Naive thymus-derived CD4-positive, alpha-beta T cell (primary cell): ENCODE measurements at regions of chr19 and their contacts with region 1.

Region 1: GRCh38 chr19:1592755-1593500 is at the start of gene MBD3:
- DNase-seq: peak; percentile 81 to 92 (median 88)
- ATAC-seq: peak; percentile 92
- H3K4me3 ChIP-seq: peak within 1 kb of the TSS; percentile 86
- H3K4me3 Mint-ChIP-seq: peak within 1 kb of the TSS; percentile 84 to 92 (median 90)
- H3K27ac ChIP-seq: peak within 1 kb of the TSS; percentile 99
- H3K27ac Mint-ChIP-seq: peak within 1 kb of the TSS; percentile 79 to 95 (median 91)
- H3K4me1 ChIP-seq: peaks cover 10 to 16% of the 10 kb centered on the region in 2 donors
- H3K4me1 Mint-ChIP-seq: peaks cover 8 to 22% (median 15%) of the 10 kb centered on the region in 7 donors
- H3K27me3 ChIP-seq: no peaks in the 10 kb centered on the region
- H3K27me3 Mint-ChIP-seq: no peaks in the 10 kb centered on the region
- total RNA-seq, gene MBD3: 50.1 to 87.8 (median 64.6) TPM

Region 2: DNA sequence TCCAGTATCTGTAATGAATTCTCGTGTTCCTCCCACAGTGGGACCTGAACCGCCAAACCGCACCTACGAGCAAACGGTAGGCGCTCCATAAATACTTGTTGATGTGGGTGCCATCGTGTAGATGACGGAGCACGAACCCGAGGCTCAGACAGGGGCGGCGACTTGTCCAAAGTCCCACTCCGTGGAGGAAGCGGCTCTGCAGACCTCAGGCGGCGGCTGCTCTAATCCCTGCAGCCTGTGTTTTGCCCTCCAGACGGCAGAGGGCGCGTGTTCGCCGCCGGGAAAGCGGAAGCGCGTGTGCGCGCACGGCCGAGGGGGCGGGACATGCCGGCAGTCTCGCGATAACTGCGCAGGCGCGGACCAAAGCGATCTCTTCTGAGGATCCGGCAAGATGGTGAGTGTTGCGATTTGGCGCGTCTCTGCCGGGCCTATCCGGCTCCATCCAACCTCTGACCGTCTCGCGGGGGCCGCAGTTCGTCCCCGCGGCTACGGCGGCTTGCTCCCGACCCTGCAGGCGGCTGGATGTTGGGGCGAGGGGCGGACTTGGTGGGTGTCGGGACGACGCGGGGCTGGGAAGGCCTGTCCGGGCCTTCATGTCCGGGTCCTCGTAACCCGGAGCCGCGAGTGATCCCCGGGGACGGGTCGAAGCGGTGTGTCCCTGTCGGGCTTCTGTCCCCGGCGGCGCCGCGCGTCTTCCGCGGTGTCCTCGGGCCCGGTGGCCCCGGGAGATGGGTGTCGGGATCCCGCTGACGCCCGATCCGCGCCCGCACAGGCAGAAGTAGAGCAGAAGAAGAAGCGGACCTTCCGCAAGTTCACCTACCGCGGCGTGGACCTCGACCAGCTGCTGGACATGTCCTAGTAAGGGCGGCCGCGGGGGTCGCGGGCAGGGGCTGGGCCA is 154.6 kb before region 1 on chr19 and contains the start of gene RPS15:
- CTCF ChIA-PET with region 1: no interaction called
- POLR2A ChIA-PET with region 1: interaction called, 3 read pairs
- intact Hi-C with region 1: loop called in 1 of 2 experiments (anchors 1 kb)
- DNase-seq: peak; percentile 92 to 98 (median 96)
- ATAC-seq: peak; percentile 97
- H3K4me3 ChIP-seq: peak within 1 kb of the TSS; percentile 82
- H3K4me3 Mint-ChIP-seq: peak within 1 kb of the TSS; percentile 87 to 99 (median 98)
- H3K27ac ChIP-seq: peak within 1 kb of the TSS; percentile 92
- H3K27ac Mint-ChIP-seq: peak within 1 kb of the TSS; percentile 96 to 100 (median 99)
- H3K4me1 ChIP-seq: peaks cover 8 to 11% of the 10 kb centered on the region in 2 donors
- H3K4me1 Mint-ChIP-seq: peaks cover 9 to 34% (median 15%) of the 10 kb centered on the region in 7 donors
- H3K27me3 ChIP-seq: no peaks in the 10 kb centered on the region
- H3K27me3 Mint-ChIP-seq: no peaks in the 10 kb centered on the region
- total RNA-seq, gene RPS15: 1,300 to 2,097 (median 2,012) TPM

Region 3: GRCh38 chr19:1507763-1508509 is 85.0 kb before region 1 on chr19:
- CTCF ChIA-PET with region 1: no interaction called
- POLR2A ChIA-PET with region 1: no interaction called
- intact Hi-C with region 1: loop called in 1 of 2 experiments (anchors 1 kb)
- DNase-seq: peak; percentile 76 to 96 (median 94)
- ATAC-seq: peak; percentile 97
- H3K4me3 ChIP-seq: peak overlapping the region; percentile 48
- H3K4me3 Mint-ChIP-seq: peak overlapping the region; percentile 75 to 92 (median 86)
- H3K27ac ChIP-seq: peak overlapping the region; percentile 79
- H3K27ac Mint-ChIP-seq: peak overlapping the region; percentile 87 to 96 (median 92)
- H3K4me1 ChIP-seq: peaks cover 4 to 18% of the 10 kb centered on the region in 2 donors
- H3K4me1 Mint-ChIP-seq: peaks cover 7 to 41% (median 27%) of the 10 kb centered on the region in 7 donors
- H3K27me3 ChIP-seq: peaks cover 0 to 2% of the 10 kb centered on the region in 2 donors
- H3K27me3 Mint-ChIP-seq: peaks cover 0 to 41% (median 2%) of the 10 kb centered on the region in 5 donors

Region 4: DNA sequence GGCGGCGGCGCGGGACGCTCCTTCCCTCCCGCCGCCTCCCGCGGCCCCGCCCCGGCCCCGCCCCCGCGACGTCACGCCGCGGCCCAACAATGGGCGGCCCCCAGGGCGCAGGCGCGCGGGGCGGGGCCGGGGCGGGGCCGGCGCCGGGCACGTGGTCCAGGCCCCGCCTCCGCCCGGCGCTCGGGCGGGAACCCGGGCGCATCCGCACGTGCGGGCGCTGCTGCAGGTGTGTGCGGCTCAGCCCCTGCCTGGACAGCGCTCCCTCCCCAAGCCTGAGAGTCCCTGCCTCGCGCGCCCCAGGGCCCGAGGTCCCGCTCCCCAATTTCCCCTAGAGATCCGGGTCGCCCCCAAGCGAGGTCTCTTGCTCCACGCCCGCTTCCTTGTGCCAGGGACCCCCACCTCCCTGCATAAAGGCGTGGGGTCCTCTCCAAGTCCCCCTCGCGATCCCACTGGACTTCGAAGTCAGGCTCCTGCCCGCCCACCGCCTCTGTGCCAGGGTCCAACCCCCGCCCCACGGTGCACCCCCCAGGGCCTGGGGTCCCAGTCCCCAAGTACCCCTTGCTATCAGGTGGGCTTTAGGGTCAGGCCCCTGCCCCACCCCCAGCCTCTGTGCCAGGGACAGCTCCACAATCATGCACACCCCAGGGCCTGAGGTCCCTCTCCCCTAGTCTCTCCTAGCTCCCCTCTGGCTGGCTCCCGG is 24.5 kb before region 1 on chr19 and contains the start of gene MEX3D:
- CTCF ChIA-PET with region 1: no interaction called
- POLR2A ChIA-PET with region 1: no interaction called
- intact Hi-C with region 1: loop called in 1 of 2 experiments (anchors 1 kb)
- DNase-seq: peak; percentile 64 to 86 (median 81)
- ATAC-seq: peak; percentile 98
- H3K4me3 ChIP-seq: no peak within 1 kb of the TSS
- H3K4me3 Mint-ChIP-seq: peak within 1 kb of the TSS in 8 of 10 donors; percentile 3 to 78 (median 50)
- H3K27ac ChIP-seq: no peak within 1 kb of the TSS
- H3K27ac Mint-ChIP-seq: peak within 1 kb of the TSS in 1 of 9 donors; percentile 52
- H3K4me1 ChIP-seq: peaks cover 5 to 6% of the 10 kb centered on the region in 2 donors
- H3K4me1 Mint-ChIP-seq: peaks cover 0 to 8% (median 3%) of the 10 kb centered on the region in 7 donors
- H3K27me3 ChIP-seq: no peaks in the 10 kb centered on the region
- H3K27me3 Mint-ChIP-seq: peaks cover 0 to 32% (median 6%) of the 10 kb centered on the region in 5 donors
- total RNA-seq, gene MEX3D: 2.1 to 8.3 (median 2.3) TPM

Region 5: DNA sequence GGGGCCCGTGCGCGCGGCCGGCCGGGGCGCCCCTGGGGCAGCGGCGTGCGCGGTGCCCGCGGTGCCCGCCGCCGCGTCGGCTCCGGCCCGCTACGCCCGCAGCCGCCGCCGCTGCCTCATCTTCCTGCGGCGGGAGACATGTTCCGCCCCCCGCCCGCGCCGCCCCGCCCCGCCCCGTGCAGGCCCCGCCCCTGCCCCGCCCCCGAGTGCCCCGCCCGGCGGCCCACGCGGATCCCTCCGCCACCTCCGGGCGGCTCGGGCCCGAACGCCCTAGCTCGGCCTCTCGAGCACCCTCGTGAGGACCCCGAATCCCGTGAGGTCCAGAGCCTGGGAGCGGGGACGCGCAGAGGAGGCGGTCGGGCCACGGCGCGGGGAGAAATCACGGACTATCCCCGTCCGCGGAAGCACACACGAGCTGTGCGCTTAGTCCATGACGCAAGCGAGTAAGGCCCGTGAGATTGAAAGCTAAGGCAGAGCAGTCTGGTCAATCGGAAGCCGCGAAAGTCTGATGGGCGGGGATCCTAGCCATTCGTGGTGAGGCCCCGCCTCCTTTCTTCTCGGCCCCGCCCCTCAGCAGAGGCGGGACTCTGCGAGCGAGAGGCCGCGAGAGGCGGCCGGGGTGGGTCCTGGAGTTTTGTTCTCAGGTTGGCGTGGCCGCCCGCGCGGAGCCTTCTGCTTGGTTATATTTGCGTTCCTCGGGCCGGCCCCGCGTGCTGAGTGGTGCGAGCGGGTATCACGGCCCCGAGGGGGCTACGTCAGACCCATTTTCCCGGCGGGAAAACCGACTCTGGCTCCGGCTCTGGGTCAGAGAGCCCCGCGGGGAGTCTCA is 59.8 kb after region 1 on chr19 and contains the start of gene TCF3:
- CTCF ChIA-PET with region 1: no interaction called
- POLR2A ChIA-PET with region 1: interaction called, 14 read pairs
- intact Hi-C with region 1: loop called (anchors 1 kb)
- DNase-seq: peak; percentile 96 to 100 (median 99)
- ATAC-seq: peak; percentile 96
- H3K4me3 ChIP-seq: peak within 1 kb of the TSS; percentile 86
- H3K4me3 Mint-ChIP-seq: peak within 1 kb of the TSS; percentile 86 to 96 (median 91)
- H3K27ac ChIP-seq: peak within 1 kb of the TSS; percentile 99
- H3K27ac Mint-ChIP-seq: peak within 1 kb of the TSS; percentile 87 to 98 (median 95)
- H3K4me1 ChIP-seq: peaks cover 4 to 8% of the 10 kb centered on the region in 2 donors
- H3K4me1 Mint-ChIP-seq: peaks cover 7 to 14% (median 10%) of the 10 kb centered on the region in 7 donors
- H3K27me3 ChIP-seq: no peaks in the 10 kb centered on the region
- H3K27me3 Mint-ChIP-seq: peaks cover 0 to 4% (median 0%) of the 10 kb centered on the region in 5 donors
- total RNA-seq, gene TCF3: 66.6 to 83.6 (median 78.3) TPM

Region 6: DNA sequence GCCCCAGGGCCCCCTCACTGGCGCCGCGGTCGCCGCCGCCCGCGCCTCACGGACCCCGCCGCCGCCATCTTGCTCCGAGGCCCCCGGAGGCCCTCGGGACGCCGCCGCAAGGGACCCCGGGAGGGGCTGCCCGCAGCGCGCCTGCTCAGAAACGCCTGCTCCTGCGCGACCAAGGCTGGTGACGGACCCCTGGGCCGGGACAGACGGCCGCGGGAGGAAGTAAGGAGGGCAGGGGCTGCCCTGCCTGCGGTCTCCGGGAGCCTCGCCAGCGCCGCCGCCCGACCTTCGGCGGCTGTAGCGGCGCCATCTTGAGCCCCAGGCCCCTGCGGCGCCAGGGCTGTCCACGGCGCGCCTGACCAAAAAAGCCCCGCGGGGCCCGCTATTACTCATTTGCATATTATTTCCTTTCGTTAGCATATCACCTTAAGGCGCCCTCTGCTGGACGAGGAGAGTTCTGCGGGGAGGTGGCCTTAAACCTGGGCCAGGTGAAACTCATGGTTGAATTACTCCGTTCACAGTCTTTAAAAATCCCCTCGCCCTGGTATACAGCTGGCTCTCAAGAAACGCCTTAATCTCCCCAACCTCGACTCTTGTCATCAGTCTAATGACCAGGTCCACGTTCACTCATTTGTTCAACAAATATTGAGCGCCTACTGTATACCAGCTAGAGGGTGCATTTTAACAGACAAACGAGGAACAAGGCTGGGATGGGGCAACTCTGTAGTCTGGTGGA is 255.6 kb after region 1 on chr19 and contains the start of gene REXO1:
- CTCF ChIA-PET with region 1: no interaction called
- POLR2A ChIA-PET with region 1: no interaction called
- intact Hi-C with region 1: loop called in 1 of 2 experiments (anchors 5 kb)
- DNase-seq: peak; percentile 96 to 100 (median 98)
- ATAC-seq: peak; percentile 90
- H3K4me3 ChIP-seq: peak within 1 kb of the TSS; percentile 85
- H3K4me3 Mint-ChIP-seq: peak within 1 kb of the TSS; percentile 83 to 95 (median 91)
- H3K27ac ChIP-seq: peak within 1 kb of the TSS; percentile 99
- H3K27ac Mint-ChIP-seq: peak within 1 kb of the TSS; percentile 85 to 95 (median 93)
- H3K4me1 ChIP-seq: peaks cover 30 to 67% of the 10 kb centered on the region in 2 donors
- H3K4me1 Mint-ChIP-seq: peaks cover 36 to 72% (median 52%) of the 10 kb centered on the region in 7 donors
- H3K27me3 ChIP-seq: no peaks in the 10 kb centered on the region
- H3K27me3 Mint-ChIP-seq: no peaks in the 10 kb centered on the region
- total RNA-seq, gene REXO1: 52.7 to 92.6 (median 73.1) TPM